ENCODE measurements at regions of chr1 and their contacts with region 1.

Region 1: GRCh38 chr1:12619792-12620487 is 1.9 kb upstream of the DHRS3 start:
- DNase-seq: peak; percentile 56 to 88 (median 74)
- ATAC-seq: peak; percentile 43
- H3K4me3 ChIP-seq: peak overlapping the region; percentile 79
- H3K4me3 Mint-ChIP-seq: peak overlapping the region; percentile 99
- H3K27ac ChIP-seq: no peak overlapping the region
- H3K27ac Mint-ChIP-seq: peak overlapping the region; percentile 88
- H3K4me1 ChIP-seq: peaks cover 54% of the 10 kb centered on the region
- H3K4me1 Mint-ChIP-seq: peaks cover 43% of the 10 kb centered on the region
- H3K27me3 ChIP-seq: no peaks in the 10 kb centered on the region
- H3K27me3 Mint-ChIP-seq: no peaks in the 10 kb centered on the region
- CTCF ChIP-seq: peak; percentile 98

Region 2: GRCh38 chr1:12275369-12275768 is 344.6 kb before region 1 on chr1:
- CTCF ChIA-PET with region 1: interaction called, 3 read pairs
- POLR2A ChIA-PET with region 1: interaction called, 3 read pairs
- intact Hi-C with region 1: loop called (anchors 1 to 2 kb)
- DNase-seq: peak; percentile 13 to 50 (median 24)
- ATAC-seq: no peak
- H3K4me3 ChIP-seq: no peak overlapping the region
- H3K4me3 Mint-ChIP-seq: no peak overlapping the region
- H3K27ac ChIP-seq: no peak overlapping the region
- H3K27ac Mint-ChIP-seq: no peak overlapping the region
- H3K4me1 ChIP-seq: no peaks in the 10 kb centered on the region
- H3K4me1 Mint-ChIP-seq: peaks cover 5% of the 10 kb centered on the region
- H3K27me3 ChIP-seq: no peaks in the 10 kb centered on the region
- H3K27me3 Mint-ChIP-seq: no peaks in the 10 kb centered on the region
- CTCF ChIP-seq: peak; percentile 59

Region 3: DNA sequence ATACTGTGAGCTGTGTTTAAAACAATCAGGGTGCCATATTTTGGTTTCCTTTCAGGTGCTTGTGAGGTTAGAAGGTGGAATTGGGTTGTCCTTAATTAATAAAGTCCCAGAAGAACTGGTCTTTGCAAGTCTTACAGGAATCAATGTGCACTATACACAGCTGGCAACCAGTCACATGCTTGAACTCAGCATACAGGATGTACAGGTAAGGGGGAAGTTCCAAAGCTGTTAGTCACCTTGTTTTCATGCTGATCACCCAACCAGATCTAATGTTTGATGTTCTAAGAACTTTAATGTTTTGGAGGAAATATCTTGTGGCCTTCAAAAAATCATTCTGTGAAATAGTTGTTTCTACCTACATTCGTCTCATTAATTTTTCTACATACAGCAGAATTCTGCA is 233.8 kb before region 1 on chr1:
- CTCF ChIA-PET with region 1: interaction called, 12 read pairs
- POLR2A ChIA-PET with region 1: interaction called, 28 read pairs
- intact Hi-C with region 1: no loop called
- DNase-seq: peak in 10 of 14 experiments; percentile 2 to 78 (median 41)
- ATAC-seq: peak; percentile 91
- H3K4me3 ChIP-seq: no peak overlapping the region
- H3K4me3 Mint-ChIP-seq: peak overlapping the region; percentile 60
- H3K27ac ChIP-seq: peak overlapping the region; percentile 50 to 60
- H3K27ac Mint-ChIP-seq: peak overlapping the region; percentile 74
- H3K4me1 ChIP-seq: peaks cover 29% of the 10 kb centered on the region
- H3K4me1 Mint-ChIP-seq: peaks cover 53% of the 10 kb centered on the region
- H3K27me3 ChIP-seq: no peaks in the 10 kb centered on the region
- H3K27me3 Mint-ChIP-seq: no peaks in the 10 kb centered on the region
- CTCF ChIP-seq: no peak

Region 4: GRCh38 chr1:12477936-12478611 is 141.9 kb before region 1 on chr1:
- CTCF ChIA-PET with region 1: interaction called, 3 read pairs
- POLR2A ChIA-PET with region 1: interaction called, 5 read pairs
- intact Hi-C with region 1: loop called in 1 of 2 experiments (anchors 10 kb)
- DNase-seq: peak in 5 of 14 experiments; percentile 6 to 38 (median 31)
- ATAC-seq: peak; percentile 30
- H3K4me3 ChIP-seq: no peak overlapping the region
- H3K4me3 Mint-ChIP-seq: peak overlapping the region; percentile 78
- H3K27ac ChIP-seq: peak overlapping the region; percentile 36 to 52
- H3K27ac Mint-ChIP-seq: peak overlapping the region; percentile 88
- H3K4me1 ChIP-seq: peaks cover 70% of the 10 kb centered on the region
- H3K4me1 Mint-ChIP-seq: peaks cover 92% of the 10 kb centered on the region
- H3K27me3 ChIP-seq: no peaks in the 10 kb centered on the region
- H3K27me3 Mint-ChIP-seq: no peaks in the 10 kb centered on the region
- CTCF ChIP-seq: no peak

Region 5: GRCh38 chr1:12596007-12596821 is 23.7 kb before region 1 on chr1:
- CTCF ChIA-PET with region 1: interaction called, 78 read pairs
- POLR2A ChIA-PET with region 1: interaction called, 59 read pairs
- intact Hi-C with region 1: loop called (anchors 1 kb)
- DNase-seq: peak in 3 of 14 experiments; percentile 19 to 67 (median 62)
- ATAC-seq: no peak
- H3K4me3 ChIP-seq: no peak overlapping the region
- H3K4me3 Mint-ChIP-seq: peak overlapping the region; percentile 34
- H3K27ac ChIP-seq: peak overlapping the region in 1 of 2 donors; percentile 21
- H3K27ac Mint-ChIP-seq: peak overlapping the region; percentile 24
- H3K4me1 ChIP-seq: peaks cover 55% of the 10 kb centered on the region
- H3K4me1 Mint-ChIP-seq: peaks cover 59% of the 10 kb centered on the region
- H3K27me3 ChIP-seq: no peaks in the 10 kb centered on the region
- H3K27me3 Mint-ChIP-seq: no peaks in the 10 kb centered on the region
- CTCF ChIP-seq: no peak

Region 6: DNA sequence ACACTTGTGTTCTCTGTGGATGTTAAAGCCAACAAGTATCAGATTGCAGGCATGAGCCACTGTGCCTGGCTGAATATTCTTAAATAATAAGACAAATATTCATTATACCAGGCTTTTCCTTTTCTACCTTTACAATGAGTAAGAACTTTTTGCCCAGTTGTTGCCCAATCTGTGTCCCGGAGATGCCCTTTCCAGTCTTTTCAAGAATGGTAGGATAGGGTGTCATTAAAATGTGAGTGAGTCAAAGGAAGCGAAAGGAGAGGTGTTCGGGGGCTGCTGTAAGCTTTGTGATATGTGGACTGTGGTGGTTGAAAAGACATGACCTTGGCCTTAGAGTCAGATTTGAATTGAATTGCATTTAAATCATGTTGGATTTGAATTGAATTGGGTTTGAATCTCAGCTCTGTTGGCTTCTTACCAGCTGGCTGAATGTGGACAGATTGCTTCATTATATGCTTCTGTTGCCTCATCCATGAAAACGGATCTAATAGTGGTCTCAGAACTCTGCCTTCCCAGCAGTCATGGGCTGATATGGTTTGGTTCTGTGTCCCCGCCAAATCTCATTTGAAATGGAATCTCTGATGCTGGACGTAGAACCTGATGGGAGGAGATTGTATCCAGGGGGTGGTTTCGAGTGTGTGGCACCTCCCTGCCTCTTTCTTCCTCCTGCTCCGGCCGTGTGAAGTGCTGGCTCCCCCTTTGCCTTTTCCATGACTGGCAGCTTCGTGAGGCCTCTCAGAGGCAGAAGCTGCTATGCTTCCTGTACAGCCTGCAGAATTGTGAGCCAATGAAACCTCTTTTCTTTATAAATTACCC is 73.2 kb after region 1 on chr1:
- CTCF ChIA-PET with region 1: no interaction called
- POLR2A ChIA-PET with region 1: no interaction called
- intact Hi-C with region 1: no loop called
- DNase-seq: no peak
- ATAC-seq: no peak
- H3K4me3 ChIP-seq: no peak overlapping the region
- H3K4me3 Mint-ChIP-seq: no peak overlapping the region
- H3K27ac ChIP-seq: no peak overlapping the region
- H3K27ac Mint-ChIP-seq: no peak overlapping the region
- H3K4me1 ChIP-seq: no peaks in the 10 kb centered on the region
- H3K4me1 Mint-ChIP-seq: no peaks in the 10 kb centered on the region
- H3K27me3 ChIP-seq: peaks cover 0 to 2% of the 10 kb centered on the region in 2 experiments
- H3K27me3 Mint-ChIP-seq: peaks cover 32% of the 10 kb centered on the region
- CTCF ChIP-seq: no peak